ENCODE measurements at regions of chr19 and their contacts with region 1.

Region 1: GRCh38 chr19:48795055-48795684 is 15.7 kb downstream of the BCAT2 start:
- DNase-seq: peak; percentile 91 to 93 (median 92)
- H3K4me3 ChIP-seq: peak overlapping the region; percentile 33
- H3K27ac ChIP-seq: peak overlapping the region; percentile 82 to 85
- H3K4me1 ChIP-seq: peaks cover 12% of the 10 kb centered on the region
- H3K27me3 ChIP-seq: no peaks in the 10 kb centered on the region
- CTCF ChIP-seq: peak; percentile 97 to 99 (median 99)
- EP300 ChIP-seq: no peak
- POLR2A ChIP-seq: peak; percentile 58

Region 2: DNA sequence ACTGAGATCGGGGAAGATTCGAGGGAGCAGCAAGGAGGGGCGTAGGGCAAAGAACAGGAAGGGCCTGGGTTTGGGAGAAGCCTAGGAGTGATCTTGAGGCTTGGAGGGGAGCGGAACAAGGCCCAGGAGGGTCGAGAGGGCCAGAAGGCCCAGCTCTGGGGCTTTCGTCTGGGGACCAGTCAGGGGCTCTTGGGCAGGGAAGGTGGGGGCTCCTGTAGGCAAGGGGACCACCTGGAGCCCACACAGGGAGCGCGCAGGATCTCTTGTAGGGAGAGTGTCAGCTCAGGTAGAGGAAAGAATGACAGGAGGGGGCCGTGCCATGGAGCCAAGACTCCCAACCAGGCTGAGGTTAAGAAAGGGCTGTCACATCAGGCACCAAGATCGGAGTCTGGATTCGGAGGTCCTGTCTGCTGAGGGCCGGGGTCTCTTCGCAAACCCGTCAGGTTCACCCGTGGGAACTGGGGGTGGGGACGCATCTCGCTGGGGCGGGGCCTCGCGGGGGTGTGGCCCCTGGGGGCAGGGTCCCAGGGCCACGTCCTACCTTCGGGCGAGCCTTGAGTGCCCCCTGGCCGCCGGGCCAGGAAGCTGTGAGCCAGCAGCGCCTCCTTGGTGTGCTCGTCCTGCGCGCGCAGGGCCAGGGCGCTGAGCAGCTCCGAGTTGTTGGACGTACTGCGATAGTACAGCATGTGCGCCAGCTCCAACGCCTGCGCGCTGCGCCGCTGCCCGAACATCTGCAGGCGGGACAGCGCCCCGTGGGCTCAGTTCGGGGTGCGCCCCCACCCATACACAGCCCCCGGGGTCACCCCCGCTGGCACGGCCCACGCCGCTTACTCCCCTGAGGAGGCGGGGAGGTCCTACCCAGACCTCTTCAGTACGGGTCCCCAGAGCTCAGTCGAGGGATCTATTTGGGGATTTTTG is 461.4 kb before region 1 on chr19:
- intact Hi-C with region 1: no loop called
- DNase-seq: peak; percentile 86 to 95 (median 87)
- H3K4me3 ChIP-seq: peak overlapping the region; percentile 33
- H3K27ac ChIP-seq: peak overlapping the region; percentile 79 to 81
- H3K4me1 ChIP-seq: peaks cover 8% of the 10 kb centered on the region
- H3K27me3 ChIP-seq: no peaks in the 10 kb centered on the region
- CTCF ChIP-seq: peak; percentile 76 to 80 (median 80)
- EP300 ChIP-seq: no peak
- POLR2A ChIP-seq: peak; percentile 36

Region 3: DNA sequence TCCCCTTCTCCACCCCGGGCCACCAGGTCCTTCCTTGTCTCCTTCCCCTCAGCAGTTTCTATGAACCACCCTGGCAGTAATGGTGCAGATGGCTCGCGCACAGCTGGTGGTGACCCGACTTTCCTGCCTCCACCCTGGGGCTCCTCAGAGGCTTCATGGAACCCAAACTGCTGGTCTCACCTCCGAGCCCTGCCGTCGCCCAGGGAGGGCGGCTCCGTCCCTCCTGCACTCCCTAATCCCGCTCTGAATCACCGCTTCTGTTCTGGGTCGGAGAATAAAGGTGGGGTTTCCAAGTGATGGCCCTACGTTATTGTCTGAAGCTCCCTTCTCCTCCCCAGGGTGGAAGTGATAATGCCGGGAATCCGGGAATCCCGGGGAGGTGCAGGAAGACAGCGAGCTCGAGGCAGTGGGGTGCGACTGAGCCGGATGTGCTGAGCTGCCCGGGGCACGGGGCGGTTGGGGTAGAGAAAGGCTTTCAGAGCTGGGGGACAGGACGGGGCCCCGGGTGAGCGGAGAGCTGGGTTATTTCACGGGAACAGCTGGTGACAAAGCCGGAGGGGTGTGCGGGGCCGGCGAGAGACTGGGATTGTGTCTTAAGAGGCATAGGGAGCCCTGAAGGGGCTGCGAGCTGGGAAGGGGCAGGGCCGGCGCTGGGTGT is 98.7 kb before region 1 on chr19:
- intact Hi-C with region 1: no loop called
- DNase-seq: no peak
- H3K4me3 ChIP-seq: peak overlapping the region; percentile 16
- H3K27ac ChIP-seq: no peak overlapping the region
- H3K4me1 ChIP-seq: no peaks in the 10 kb centered on the region
- H3K27me3 ChIP-seq: no peaks in the 10 kb centered on the region
- CTCF ChIP-seq: no peak
- EP300 ChIP-seq: no peak
- POLR2A ChIP-seq: no peak

Region 4: GRCh38 chr19:48819366-48819816 is 24.2 kb after region 1 on chr19:
- intact Hi-C with region 1: no loop called
- DNase-seq: peak; percentile 85 to 92 (median 89)
- H3K4me3 ChIP-seq: no peak overlapping the region
- H3K27ac ChIP-seq: peak overlapping the region; percentile 36 to 47
- H3K4me1 ChIP-seq: peaks cover 14% of the 10 kb centered on the region
- H3K27me3 ChIP-seq: no peaks in the 10 kb centered on the region
- CTCF ChIP-seq: no peak
- EP300 ChIP-seq: no peak
- POLR2A ChIP-seq: no peak

Region 5: GRCh38 chr19:48835734-48836088 is 40.5 kb after region 1 on chr19:
- intact Hi-C with region 1: loop called (anchors 2 to 5 kb)
- DNase-seq: peak; percentile 96 to 98 (median 96)
- H3K4me3 ChIP-seq: peak overlapping the region; percentile 27
- H3K27ac ChIP-seq: peak overlapping the region; percentile 90 to 95
- H3K4me1 ChIP-seq: peaks cover 3% of the 10 kb centered on the region
- H3K27me3 ChIP-seq: no peaks in the 10 kb centered on the region
- CTCF ChIP-seq: peak; percentile 87 to 99 (median 96)
- EP300 ChIP-seq: no peak
- POLR2A ChIP-seq: peak; percentile 53

Region 6: GRCh38 chr19:48975947-48976847 is 181.0 kb after region 1 on chr19:
- intact Hi-C with region 1: loop called in 1 of 4 experiments (anchors 5 kb)
- DNase-seq: no peak
- H3K4me3 ChIP-seq: no peak overlapping the region
- H3K27ac ChIP-seq: no peak overlapping the region
- H3K4me1 ChIP-seq: no peaks in the 10 kb centered on the region
- H3K27me3 ChIP-seq: no peaks in the 10 kb centered on the region
- CTCF ChIP-seq: no peak
- EP300 ChIP-seq: no peak
- POLR2A ChIP-seq: no peak

Measured in ovary (tissue), 10 donors.